BJ (cell line): ENCODE measurements at regions of chr9 and their contacts with region 1.

Region 1: GRCh38 chr9:99173570-99174504 is 47.9 kb downstream of the ALG2 start:
- DNase-seq: no peak
- H3K4me3 ChIP-seq: no peak overlapping the region
- H3K27me3 ChIP-seq: peaks cover 6% of the 10 kb centered on the region
- CTCF ChIP-seq: no peak

Region 2: DNA sequence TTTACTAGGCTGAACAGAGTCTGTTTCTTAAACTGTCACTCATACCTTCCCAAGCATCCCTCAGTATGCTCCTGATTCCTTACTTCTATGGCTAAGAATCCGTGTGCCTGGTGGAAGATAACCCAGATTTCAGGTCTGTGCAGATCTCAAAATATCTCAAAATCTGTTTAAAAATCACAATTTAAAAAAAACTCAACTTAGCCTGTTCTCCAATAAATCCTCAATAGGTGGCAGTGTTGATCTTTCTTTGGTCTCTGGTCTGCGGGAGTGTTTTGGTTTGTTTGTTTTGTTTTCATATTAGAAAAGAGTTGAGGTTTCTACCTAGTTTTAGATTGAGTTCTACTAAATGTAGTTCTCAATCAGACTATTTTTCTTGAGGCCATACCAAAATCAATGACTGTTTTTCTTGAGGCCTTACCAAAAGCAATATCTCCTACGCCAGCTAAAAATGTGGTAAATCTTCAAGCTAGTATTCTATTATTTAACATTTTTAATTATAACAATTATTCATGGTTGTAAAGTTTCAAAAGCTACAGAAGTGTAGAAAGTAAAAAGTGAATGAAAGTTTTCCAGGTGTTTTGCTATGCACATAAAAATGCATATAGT is 11.0 kb before region 1 on chr9:
- CTCF ChIA-PET with region 1: interaction called, 26 read pairs
- POLR2A ChIA-PET with region 1: no interaction called
- DNase-seq: no peak
- H3K4me3 ChIP-seq: no peak overlapping the region
- H3K27me3 ChIP-seq: no peaks in the 10 kb centered on the region
- CTCF ChIP-seq: peak; percentile 60

Region 3: GRCh38 chr9:99272836-99273235 is 99.0 kb after region 1 on chr9:
- CTCF ChIA-PET with region 1: no interaction called
- POLR2A ChIA-PET with region 1: no interaction called
- DNase-seq: no peak
- H3K4me3 ChIP-seq: no peak overlapping the region
- H3K27me3 ChIP-seq: no peaks in the 10 kb centered on the region
- CTCF ChIP-seq: no peak